ENCODE measurements at regions of chr1 and their contacts with region 1.

Region 1: GRCh38 chr1:27102707-27103491 is 52.0 kb downstream of the SLC9A1 start:
- DNase-seq: peak; percentile 59 to 94 (median 76)
- ATAC-seq: peak; percentile 51
- H3K4me3 ChIP-seq: no peak overlapping the region
- H3K27ac ChIP-seq: no peak overlapping the region
- H3K4me1 ChIP-seq: peaks cover 20 to 25% of the 10 kb centered on the region in 2 donors
- H3K27me3 ChIP-seq: no peaks in the 10 kb centered on the region
- CTCF ChIP-seq: peak; percentile 95 to 99

Region 2: DNA sequence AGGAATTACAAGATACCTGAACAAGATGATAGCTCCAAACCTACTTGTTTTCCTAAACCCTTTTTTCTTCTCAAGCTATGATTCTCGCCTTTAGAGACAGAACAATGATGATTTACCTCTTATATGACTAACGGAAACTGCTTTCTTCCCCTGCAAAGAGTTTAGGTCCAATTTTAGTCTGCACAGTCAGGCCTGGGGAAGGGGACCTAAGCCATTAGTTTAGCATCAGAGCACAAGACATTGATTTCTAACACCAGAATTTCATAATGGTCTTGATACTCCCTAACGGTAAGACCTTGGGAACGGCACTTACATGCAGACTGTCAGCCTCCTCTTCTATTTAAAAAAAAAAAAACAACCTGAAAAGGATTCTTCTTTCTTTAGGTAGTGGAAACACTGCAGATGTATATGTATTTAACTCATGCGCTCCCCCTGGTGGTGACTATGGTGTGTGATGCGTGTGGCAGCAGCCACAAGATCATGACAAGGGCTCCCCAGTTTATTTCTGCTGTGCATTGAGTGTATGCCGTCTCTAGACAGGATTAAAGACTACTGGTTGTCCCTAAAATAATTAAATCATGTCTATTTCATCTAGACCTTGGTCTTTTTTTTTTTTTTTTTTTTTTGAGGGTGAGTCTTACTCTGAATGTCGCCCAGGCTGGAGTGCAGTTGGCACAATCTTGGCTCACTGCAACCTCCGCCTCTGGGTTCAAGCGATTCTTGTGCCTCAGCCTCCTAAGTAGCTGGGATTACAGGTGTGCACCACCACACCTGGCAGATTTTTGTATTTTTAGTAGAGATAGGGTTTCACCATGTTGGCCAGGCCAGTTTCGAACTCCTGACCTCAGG is 181.8 kb after region 1 on chr1:
- intact Hi-C with region 1: loop called in 1 of 2 experiments (anchors 5 kb)
- DNase-seq: peak; percentile 72 to 86 (median 84)
- ATAC-seq: peak; percentile 97
- H3K4me3 ChIP-seq: no peak overlapping the region
- H3K27ac ChIP-seq: no peak overlapping the region
- H3K4me1 ChIP-seq: no peaks in the 10 kb centered on the region
- H3K27me3 ChIP-seq: no peaks in the 10 kb centered on the region
- CTCF ChIP-seq: peak; percentile 81 to 93

Measured in left lung (tissue), 14 donors.